ENCODE measurements at regions of chr5 and their contacts with region 1.

Region 1: DNA sequence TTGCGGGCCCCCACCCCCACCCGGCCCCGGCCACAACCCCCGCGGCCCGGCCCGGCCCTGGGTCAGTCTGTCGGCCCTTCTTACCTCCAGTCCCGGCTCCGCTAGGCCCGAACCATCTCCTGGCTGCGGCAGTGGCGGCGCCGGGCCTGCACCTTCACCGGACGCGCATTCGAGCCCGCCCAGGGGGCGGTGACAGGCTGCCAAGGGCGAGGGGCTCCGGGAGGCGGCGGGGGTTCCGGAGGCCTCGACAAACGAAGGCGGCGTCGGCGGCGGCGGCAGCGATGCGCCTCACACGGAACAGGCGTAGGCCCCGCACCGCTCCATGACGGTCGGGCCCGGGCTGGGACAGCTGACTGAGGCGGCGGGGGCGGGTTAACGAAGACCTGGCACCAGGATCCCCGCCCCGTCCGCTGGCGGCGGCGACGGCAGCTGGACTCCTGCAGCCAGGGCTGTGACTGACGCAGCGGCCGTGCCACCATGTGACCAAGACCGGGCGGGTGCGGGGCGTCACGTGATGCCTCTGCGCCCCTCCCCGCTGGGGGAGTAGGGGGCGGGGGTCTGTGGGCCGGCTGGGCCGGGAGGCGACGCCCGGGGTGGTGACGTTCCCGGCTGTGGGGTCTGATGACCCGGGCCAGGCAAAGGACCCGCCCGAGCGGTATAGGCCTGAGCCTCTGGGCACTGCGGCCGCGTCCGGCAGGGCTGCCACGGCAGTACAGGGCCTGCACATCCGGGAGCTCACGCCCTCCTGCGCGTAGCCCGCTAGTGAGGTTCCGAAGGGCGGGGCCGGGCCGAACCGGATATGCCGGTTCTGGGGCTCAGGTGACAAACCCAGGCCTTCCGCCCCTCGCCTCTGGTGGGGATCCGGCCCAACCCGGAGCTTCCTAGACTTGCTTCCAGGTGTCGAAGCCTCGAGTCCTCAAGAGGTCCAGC is at the start of gene AFF4:
- DNase-seq: peak; percentile 82
- ATAC-seq: peak; percentile 93
- H3K4me3 ChIP-seq: peak within 1 kb of the TSS; percentile 64 to 67
- H3K27ac ChIP-seq: peak within 1 kb of the TSS; percentile 85
- H3K4me1 ChIP-seq: peaks cover 10 to 25% of the 10 kb centered on the region in 2 experiments
- H3K27me3 ChIP-seq: no peaks in the 10 kb centered on the region
- CTCF ChIP-seq: no peak
- POLR2A ChIP-seq: peak; percentile 78
- RAD21 ChIP-seq: no peak
- total RNA-seq, gene AFF4: 38.6 TPM

Region 2: GRCh38 chr5:133051580-133052332 is 88.3 kb after region 1 on chr5 and contains the start of gene HSPA4:
- CTCF ChIA-PET with region 1: no interaction called
- POLR2A ChIA-PET with region 1: interaction called, 6 read pairs
- RAD21 ChIA-PET with region 1: no interaction called
- intact Hi-C with region 1: loop called (anchors 5 kb)
- DNase-seq: peak; percentile 97
- ATAC-seq: peak; percentile 89
- H3K4me3 ChIP-seq: peak within 1 kb of the TSS; percentile 75 to 99
- H3K27ac ChIP-seq: peak within 1 kb of the TSS; percentile 98
- H3K4me1 ChIP-seq: peaks cover 16 to 23% of the 10 kb centered on the region in 2 experiments
- H3K27me3 ChIP-seq: no peaks in the 10 kb centered on the region
- CTCF ChIP-seq: no peak
- POLR2A ChIP-seq: no peak
- RAD21 ChIP-seq: no peak
- total RNA-seq, gene HSPA4: 212 TPM

Measured in HCT116 (cell line).